ENCODE measurements at regions of chr5 and their contacts with region 1.

Region 1: GRCh38 chr5:78527054-78527859 is 121.3 kb downstream of the LHFPL2 start:
- DNase-seq: no peak
- ATAC-seq: no peak
- H3K4me3 ChIP-seq: no peak overlapping the region
- H3K27ac ChIP-seq: no peak overlapping the region
- H3K4me1 ChIP-seq: no peaks in the 10 kb centered on the region
- H3K27me3 ChIP-seq: no peaks in the 10 kb centered on the region
- CTCF ChIP-seq: no peak

Region 2: GRCh38 chr5:78377056-78377717 is 150.1 kb before region 1 on chr5:
- CTCF ChIA-PET with region 1: no interaction called
- POLR2A ChIA-PET with region 1: no interaction called
- in situ Hi-C with region 1: no loop called
- intact Hi-C with region 1: no loop called
- DNase-seq: no peak
- ATAC-seq: no peak
- H3K4me3 ChIP-seq: no peak overlapping the region
- H3K27ac ChIP-seq: no peak overlapping the region
- H3K4me1 ChIP-seq: peaks cover 8% of the 10 kb centered on the region; the same call in 1 of the 2 replicates
- H3K27me3 ChIP-seq: no peaks in the 10 kb centered on the region
- CTCF ChIP-seq: no peak

Region 3: GRCh38 chr5:78549043-78549442 is 21.8 kb after region 1 on chr5:
- CTCF ChIA-PET with region 1: no interaction called
- POLR2A ChIA-PET with region 1: no interaction called
- in situ Hi-C with region 1: no loop called
- intact Hi-C with region 1: no loop called
- DNase-seq: no peak
- ATAC-seq: no peak
- H3K4me3 ChIP-seq: no peak overlapping the region
- H3K27ac ChIP-seq: no peak overlapping the region
- H3K4me1 ChIP-seq: no peaks in the 10 kb centered on the region
- H3K27me3 ChIP-seq: no peaks in the 10 kb centered on the region
- CTCF ChIP-seq: no peak

Region 4: GRCh38 chr5:78594610-78595457 is 67.6 kb after region 1 on chr5:
- CTCF ChIA-PET with region 1: no interaction called
- POLR2A ChIA-PET with region 1: no interaction called
- in situ Hi-C with region 1: no loop called
- intact Hi-C with region 1: no loop called
- DNase-seq: peak; percentile 77
- ATAC-seq: peak; percentile 92
- H3K4me3 ChIP-seq: no peak overlapping the region
- H3K27ac ChIP-seq: peak overlapping the region; percentile 55
- H3K4me1 ChIP-seq: peaks cover 54% of the 10 kb centered on the region
- H3K27me3 ChIP-seq: no peaks in the 10 kb centered on the region
- CTCF ChIP-seq: no peak

Region 5: DNA sequence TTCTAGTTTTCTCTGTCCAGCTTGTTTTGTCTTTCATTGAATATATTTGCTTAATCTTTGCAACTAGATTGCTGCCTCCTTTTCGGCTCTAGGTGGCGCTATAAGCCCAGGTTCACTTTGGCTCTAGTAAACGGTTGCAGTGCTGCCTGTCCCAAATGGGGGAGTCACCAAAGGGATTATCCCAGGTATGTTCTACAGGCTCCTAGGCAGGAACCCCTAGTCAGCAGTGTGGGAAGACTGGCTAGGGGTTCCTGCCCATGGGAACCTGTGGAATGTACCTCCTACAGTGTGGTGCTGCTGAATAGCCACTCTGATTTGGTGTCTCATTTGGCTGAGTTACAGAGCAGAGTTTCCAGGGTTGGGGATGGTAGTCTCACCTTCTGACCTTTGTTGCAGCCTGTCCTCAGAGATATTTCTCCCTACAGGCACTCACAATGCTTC is 372.7 kb after region 1 on chr5:
- CTCF ChIA-PET with region 1: no interaction called
- POLR2A ChIA-PET with region 1: interaction called, 11 read pairs
- in situ Hi-C with region 1: no loop called
- intact Hi-C with region 1: no loop called
- DNase-seq: no peak
- ATAC-seq: no peak
- H3K4me3 ChIP-seq: no peak overlapping the region
- H3K27ac ChIP-seq: no peak overlapping the region
- H3K4me1 ChIP-seq: no peaks in the 10 kb centered on the region
- H3K27me3 ChIP-seq: no peaks in the 10 kb centered on the region
- CTCF ChIP-seq: peak; percentile 73

Measured in Panc1 (cell line).